ENCODE measurements at regions of chr7 and their contacts with region 1.

Region 1: DNA sequence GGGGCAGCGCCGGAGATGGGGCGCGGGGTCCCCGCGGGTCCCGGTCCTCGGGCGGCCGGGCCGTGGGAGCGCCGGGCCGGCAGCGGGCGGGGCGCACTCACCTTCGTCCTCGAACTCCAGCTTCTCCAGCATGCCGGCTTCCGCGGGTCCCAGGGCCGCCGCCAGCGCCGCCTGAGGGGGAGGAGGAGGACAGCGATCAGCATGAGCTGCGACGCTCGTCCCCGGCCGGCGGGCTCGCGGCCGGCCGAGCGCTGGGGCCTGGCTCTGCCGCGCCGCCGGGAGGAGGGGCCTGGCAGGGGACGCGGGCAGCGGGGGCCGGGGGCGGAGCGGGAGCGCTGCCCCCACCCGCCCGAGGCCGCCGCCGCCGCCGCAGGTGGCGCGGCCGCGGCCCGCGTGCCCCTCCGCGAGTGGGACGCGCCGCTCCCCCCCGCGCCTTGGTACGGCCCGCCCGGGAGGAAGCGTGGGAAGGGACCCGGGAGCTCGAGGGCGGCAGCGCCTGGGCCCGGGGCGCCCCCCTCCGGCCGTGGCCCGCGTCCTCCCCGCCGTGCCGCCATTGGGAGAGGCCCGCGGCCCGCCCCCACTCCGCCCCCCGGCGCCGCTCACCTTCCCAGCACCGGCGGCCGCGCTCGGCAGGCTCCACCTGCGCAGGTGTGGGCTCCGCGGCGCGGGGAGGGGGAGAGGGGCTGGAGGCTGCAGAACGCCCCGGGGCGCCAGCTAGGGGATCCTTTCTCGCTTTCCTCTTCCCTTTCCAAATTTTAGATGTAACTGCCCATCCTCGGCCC is 112.5 kb upstream of the RHEB start:
- DNase-seq: peak; percentile 84 to 88
- ATAC-seq: peak; percentile 82 to 92 (median 86)
- H3K4me3 ChIP-seq: peak overlapping the region; percentile 50 to 82 (median 66)
- H3K27ac ChIP-seq: peak overlapping the region; percentile 91 to 95 (median 93)
- H3K4me1 ChIP-seq: peaks cover 0 to 45% (median 28%) of the 10 kb centered on the region in 9 donors
- H3K27me3 ChIP-seq: no peaks in the 10 kb centered on the region
- CTCF ChIP-seq: peak in 8 of 9 donors; percentile 18 to 53 (median 32)

Region 2: GRCh38 chr7:151599401-151600227 is 32.5 kb before region 1 on chr7:
- intact Hi-C with region 1: no loop called
- DNase-seq: peak in 1 of 2 donors; percentile 53
- ATAC-seq: peak; percentile 86 to 96 (median 92)
- H3K4me3 ChIP-seq: no peak overlapping the region
- H3K27ac ChIP-seq: peak overlapping the region; percentile 65 to 87 (median 76)
- H3K4me1 ChIP-seq: peaks cover 5 to 42% (median 34%) of the 10 kb centered on the region in 9 donors
- H3K27me3 ChIP-seq: no peaks in the 10 kb centered on the region
- CTCF ChIP-seq: no peak

Region 3: DNA sequence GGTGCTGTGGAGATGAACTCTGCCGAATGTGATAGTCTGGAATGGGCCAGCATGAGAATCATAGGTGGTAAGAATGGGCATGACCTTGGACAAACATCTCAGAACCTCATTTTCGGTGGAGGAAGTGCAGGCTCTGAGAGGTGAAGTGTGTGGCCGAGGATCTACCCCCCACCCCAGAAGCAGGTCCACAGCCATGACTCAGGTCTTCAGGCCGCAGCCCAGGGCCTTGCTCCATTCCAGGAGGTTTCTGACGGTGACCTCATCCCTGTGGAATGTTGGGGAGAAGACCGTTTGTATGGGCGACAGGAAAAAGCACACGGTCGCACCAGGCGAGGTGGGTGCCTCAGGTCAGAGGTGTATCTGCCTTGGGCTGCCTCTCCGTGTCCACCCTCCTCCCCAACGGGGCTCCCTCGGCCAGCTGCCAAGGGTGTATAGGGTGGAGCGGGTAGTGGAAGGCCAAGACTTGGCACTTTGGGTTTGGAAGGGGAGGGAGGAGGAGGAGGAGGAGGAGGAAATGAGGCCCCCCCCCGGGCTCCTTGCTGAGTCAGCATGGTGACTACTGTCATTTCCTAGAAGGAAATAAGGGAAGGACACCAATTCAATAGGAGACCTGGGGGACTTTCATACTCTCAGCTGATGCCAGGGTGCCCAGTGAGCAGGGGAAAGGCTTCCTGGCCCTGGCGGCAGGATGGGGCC is 55.5 kb after region 1 on chr7:
- intact Hi-C with region 1: loop called in 5 of 10 experiments (anchors 2 to 5 kb)
- DNase-seq: peak; percentile 43 to 47
- ATAC-seq: peak; percentile 18 to 80 (median 62)
- H3K4me3 ChIP-seq: no peak overlapping the region
- H3K27ac ChIP-seq: peak overlapping the region in 9 of 10 donors; percentile 34 to 82 (median 69)
- H3K4me1 ChIP-seq: peaks cover 3 to 65% (median 42%) of the 10 kb centered on the region in 9 donors
- H3K27me3 ChIP-seq: no peaks in the 10 kb centered on the region
- CTCF ChIP-seq: no peak

Region 4: GRCh38 chr7:151694828-151695580 is 62.8 kb after region 1 on chr7:
- intact Hi-C with region 1: loop called in 7 of 10 experiments (anchors 2 to 10 kb)
- DNase-seq: peak; percentile 70 to 84
- ATAC-seq: peak; percentile 80 to 94 (median 86)
- H3K4me3 ChIP-seq: no peak overlapping the region
- H3K27ac ChIP-seq: peak overlapping the region; percentile 56 to 95 (median 82)
- H3K4me1 ChIP-seq: peaks cover 11 to 90% (median 55%) of the 10 kb centered on the region in 9 donors
- H3K27me3 ChIP-seq: no peaks in the 10 kb centered on the region
- CTCF ChIP-seq: no peak

Region 5: GRCh38 chr7:151705636-151706276 is 73.6 kb after region 1 on chr7:
- intact Hi-C with region 1: loop called in 7 of 10 experiments (anchors 5 to 10 kb)
- DNase-seq: peak in 1 of 2 donors; percentile 53
- ATAC-seq: peak; percentile 21 to 72 (median 56)
- H3K4me3 ChIP-seq: peak overlapping the region in 5 of 10 donors; percentile 4 to 26 (median 18)
- H3K27ac ChIP-seq: peak overlapping the region in 3 of 10 donors; percentile 17 to 38 (median 35)
- H3K4me1 ChIP-seq: peaks cover 5 to 47% (median 31%) of the 10 kb centered on the region in 9 donors
- H3K27me3 ChIP-seq: no peaks in the 10 kb centered on the region
- CTCF ChIP-seq: peak; percentile 21 to 67 (median 54)

Region 6: DNA sequence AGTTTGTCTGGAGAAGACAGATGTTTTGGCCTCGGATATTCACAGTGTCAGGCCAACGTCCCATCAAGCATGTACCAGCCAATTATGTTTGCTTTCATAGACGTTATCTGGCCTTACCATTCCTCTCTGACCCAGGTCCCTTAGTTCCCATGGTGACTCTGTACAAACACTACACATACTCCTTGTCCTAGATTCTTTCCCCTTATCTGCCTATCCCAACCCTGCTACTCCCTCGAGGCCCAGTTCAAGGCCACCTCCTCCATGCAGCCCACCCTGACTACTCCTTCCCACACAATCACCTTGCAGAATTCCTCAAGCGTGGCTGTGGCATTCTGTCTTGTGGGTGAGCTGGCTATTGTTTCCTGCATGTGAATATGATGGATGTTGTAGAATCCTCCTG is 89.5 kb after region 1 on chr7:
- intact Hi-C with region 1: no loop called
- DNase-seq: no peak
- ATAC-seq: peak in 7 of 8 donors; percentile 3 to 63 (median 31)
- H3K4me3 ChIP-seq: no peak overlapping the region
- H3K27ac ChIP-seq: peak overlapping the region; percentile 26 to 88 (median 84)
- H3K4me1 ChIP-seq: peaks cover 3 to 73% (median 43%) of the 10 kb centered on the region in 9 donors
- H3K27me3 ChIP-seq: no peaks in the 10 kb centered on the region
- CTCF ChIP-seq: no peak

Region 7: DNA sequence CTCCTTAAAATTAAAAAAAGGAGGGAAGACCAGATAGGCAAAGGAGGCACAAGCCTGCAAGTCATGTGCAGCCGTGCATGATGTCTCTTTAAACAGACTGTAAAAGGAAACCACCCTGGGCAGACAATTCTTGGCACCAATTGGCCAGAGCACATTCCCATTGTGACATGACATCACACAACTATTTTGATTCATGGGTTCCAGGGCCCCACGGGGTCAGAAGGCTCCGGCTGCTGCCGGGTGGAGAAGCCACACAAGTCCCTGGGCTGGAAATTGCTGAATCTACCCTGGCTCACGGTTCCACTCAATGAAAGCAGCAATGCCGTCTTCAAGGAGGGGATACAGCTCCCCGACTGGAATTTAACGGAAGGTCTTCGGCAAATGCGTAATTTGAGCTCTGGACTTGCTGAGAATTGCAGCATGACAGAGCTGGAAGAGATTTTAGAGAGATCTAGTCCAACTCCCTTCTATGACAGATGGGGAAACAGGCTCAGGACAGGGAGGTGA is 104.3 kb after region 1 on chr7:
- intact Hi-C with region 1: loop called in 2 of 10 experiments (anchors 5 to 10 kb)
- DNase-seq: peak; percentile 58 to 84
- ATAC-seq: peak; percentile 83 to 95 (median 92)
- H3K4me3 ChIP-seq: peak overlapping the region in 9 of 10 donors; percentile 46 to 64 (median 56)
- H3K27ac ChIP-seq: peak overlapping the region; percentile 59 to 98 (median 90)
- H3K4me1 ChIP-seq: peaks cover 5 to 48% (median 16%) of the 10 kb centered on the region in 9 donors
- H3K27me3 ChIP-seq: no peaks in the 10 kb centered on the region
- CTCF ChIP-seq: peak in 3 of 9 donors; percentile 22 to 34 (median 31)

Region 8: DNA sequence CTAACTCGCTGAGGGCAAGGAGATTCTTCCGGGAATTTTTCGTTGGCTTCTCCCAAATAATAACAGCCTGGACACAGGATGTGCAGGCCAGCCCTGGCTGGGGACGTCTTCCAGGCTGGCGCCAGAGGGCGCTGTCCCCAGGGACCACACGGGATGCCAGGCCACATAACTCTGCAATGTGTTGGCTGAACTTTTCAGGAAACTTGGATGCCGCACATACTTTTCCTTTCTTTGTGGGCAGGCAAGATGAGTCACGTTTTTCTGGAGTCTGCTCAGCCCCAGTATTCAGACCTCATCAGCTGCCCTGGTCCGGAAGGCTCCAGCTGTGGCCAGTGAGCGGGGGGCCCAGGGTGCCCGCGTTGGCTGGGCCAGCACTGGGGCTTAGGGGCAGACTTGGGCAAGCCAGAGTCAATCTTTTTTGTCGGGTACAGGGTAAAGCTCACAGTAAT is 122.0 kb after region 1 on chr7:
- intact Hi-C with region 1: loop called in 8 of 10 experiments (anchors 2 to 10 kb)
- DNase-seq: peak; percentile 80 to 81
- ATAC-seq: peak; percentile 86 to 95 (median 91)
- H3K4me3 ChIP-seq: no peak overlapping the region
- H3K27ac ChIP-seq: peak overlapping the region; percentile 5 to 88 (median 78)
- H3K4me1 ChIP-seq: peaks cover 12 to 41% (median 25%) of the 10 kb centered on the region in 9 donors
- H3K27me3 ChIP-seq: no peaks in the 10 kb centered on the region
- CTCF ChIP-seq: peak; percentile 77 to 90 (median 85)

Region 9: GRCh38 chr7:151759591-151760042 is 127.5 kb after region 1 on chr7:
- intact Hi-C with region 1: loop called in 8 of 10 experiments (anchors 2 to 10 kb)
- DNase-seq: peak in 1 of 2 donors; percentile 60
- ATAC-seq: peak; percentile 27 to 65 (median 51)
- H3K4me3 ChIP-seq: no peak overlapping the region
- H3K27ac ChIP-seq: no peak overlapping the region
- H3K4me1 ChIP-seq: peaks cover 9 to 37% (median 22%) of the 10 kb centered on the region in 9 donors
- H3K27me3 ChIP-seq: no peaks in the 10 kb centered on the region
- CTCF ChIP-seq: peak; percentile 76 to 95 (median 88)